Lower lobe of right lung (tissue), 2 donors: ENCODE measurements at regions of chr15 and their contacts with region 1.

Region 1: DNA sequence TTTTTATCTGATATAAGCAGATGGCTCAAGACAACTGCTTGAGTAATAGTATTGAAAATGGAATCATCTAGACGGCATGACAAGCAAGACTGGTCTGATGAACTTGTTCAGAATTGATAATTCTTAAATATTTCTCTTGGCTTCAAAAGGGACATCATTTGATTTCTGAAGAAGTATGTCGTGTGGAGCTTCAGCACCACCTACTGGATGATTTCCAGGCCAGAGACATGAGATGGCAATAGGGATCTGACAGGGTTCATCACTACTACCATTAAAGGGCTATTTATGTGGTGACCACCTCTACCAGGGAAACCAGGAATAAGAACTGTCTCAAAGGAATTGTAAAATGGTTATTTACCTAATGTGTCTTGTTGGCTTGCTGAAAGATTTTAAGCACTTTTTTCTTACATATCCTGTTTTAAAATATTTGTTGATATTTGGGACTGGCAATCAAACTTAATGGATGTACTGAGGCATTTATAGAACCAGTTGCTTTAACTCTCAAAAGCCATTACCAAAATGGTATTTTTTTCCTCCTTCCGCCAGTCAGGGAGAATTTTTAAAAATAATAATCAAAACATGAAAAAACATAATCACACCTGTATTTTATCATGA is 99.5 kb upstream of the FAM98B start:
- DNase-seq: no peak
- ATAC-seq: peak; percentile 56 to 68
- H3K4me3 ChIP-seq: no peak overlapping the region
- H3K27ac ChIP-seq: no peak overlapping the region
- H3K4me1 ChIP-seq: no peaks in the 10 kb centered on the region
- H3K27me3 ChIP-seq: no peaks in the 10 kb centered on the region
- CTCF ChIP-seq: peak; percentile 80

Region 2: GRCh38 chr15:38002883-38003477 is 351.4 kb before region 1 on chr15:
- intact Hi-C with region 1: loop called (anchors 10 kb)
- DNase-seq: peak; percentile 74
- ATAC-seq: peak; percentile 85 to 92
- H3K4me3 ChIP-seq: no peak overlapping the region
- H3K27ac ChIP-seq: no peak overlapping the region
- H3K4me1 ChIP-seq: peaks cover 5% of the 10 kb centered on the region
- H3K27me3 ChIP-seq: no peaks in the 10 kb centered on the region
- CTCF ChIP-seq: peak; percentile 71

Region 3: GRCh38 chr15:38112406-38112805 is 242.0 kb before region 1 on chr15:
- intact Hi-C with region 1: no loop called
- DNase-seq: no peak
- ATAC-seq: no peak
- H3K4me3 ChIP-seq: no peak overlapping the region
- H3K27ac ChIP-seq: no peak overlapping the region
- H3K4me1 ChIP-seq: no peaks in the 10 kb centered on the region
- H3K27me3 ChIP-seq: no peaks in the 10 kb centered on the region
- CTCF ChIP-seq: no peak